ENCODE measurements at regions of chr12 and their contacts with region 1.

Region 1: GRCh38 chr12:39541471-39541870 is 78.1 kb downstream of the ABCD2 start:
- DNase-seq: no peak
- ATAC-seq: no peak
- H3K4me3 ChIP-seq: no peak overlapping the region
- H3K4me3 Mint-ChIP-seq: no peak overlapping the region
- H3K27ac ChIP-seq: no peak overlapping the region
- H3K27ac Mint-ChIP-seq: no peak overlapping the region
- H3K4me1 ChIP-seq: no peaks in the 10 kb centered on the region
- H3K4me1 Mint-ChIP-seq: no peaks in the 10 kb centered on the region
- H3K27me3 ChIP-seq: no peaks in the 10 kb centered on the region
- H3K27me3 Mint-ChIP-seq: no peaks in the 10 kb centered on the region

Region 2: DNA sequence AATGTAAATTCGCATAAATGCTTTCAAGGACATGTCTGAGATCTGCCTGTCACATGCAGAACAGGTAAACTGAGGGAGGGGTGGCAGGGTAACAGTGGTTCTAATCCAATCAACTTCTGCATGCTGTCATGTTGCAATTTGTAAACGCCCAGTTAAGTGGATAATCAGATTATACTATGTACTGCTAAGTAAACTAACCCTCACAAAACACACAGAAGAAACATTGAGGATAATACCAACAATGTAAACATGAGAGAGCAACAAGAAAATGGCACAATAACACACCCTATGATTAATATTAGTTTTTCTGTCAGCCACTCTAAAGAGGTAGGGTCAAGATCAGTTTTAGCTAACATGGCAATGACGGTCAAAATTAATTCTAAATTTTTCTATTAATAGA is 222.3 kb before region 1 on chr12:
- CTCF ChIA-PET with region 1: no interaction called
- POLR2A ChIA-PET with region 1: no interaction called
- intact Hi-C with region 1: loop called in 1 of 2 experiments (anchors 10 kb)
- DNase-seq: no peak
- ATAC-seq: no peak
- H3K4me3 ChIP-seq: no peak overlapping the region
- H3K4me3 Mint-ChIP-seq: no peak overlapping the region
- H3K27ac ChIP-seq: no peak overlapping the region
- H3K27ac Mint-ChIP-seq: no peak overlapping the region
- H3K4me1 ChIP-seq: no peaks in the 10 kb centered on the region
- H3K4me1 Mint-ChIP-seq: peaks cover 0 to 5% (median 0%) of the 10 kb centered on the region in 7 donors
- H3K27me3 ChIP-seq: no peaks in the 10 kb centered on the region
- H3K27me3 Mint-ChIP-seq: no peaks in the 10 kb centered on the region

Region 3: DNA sequence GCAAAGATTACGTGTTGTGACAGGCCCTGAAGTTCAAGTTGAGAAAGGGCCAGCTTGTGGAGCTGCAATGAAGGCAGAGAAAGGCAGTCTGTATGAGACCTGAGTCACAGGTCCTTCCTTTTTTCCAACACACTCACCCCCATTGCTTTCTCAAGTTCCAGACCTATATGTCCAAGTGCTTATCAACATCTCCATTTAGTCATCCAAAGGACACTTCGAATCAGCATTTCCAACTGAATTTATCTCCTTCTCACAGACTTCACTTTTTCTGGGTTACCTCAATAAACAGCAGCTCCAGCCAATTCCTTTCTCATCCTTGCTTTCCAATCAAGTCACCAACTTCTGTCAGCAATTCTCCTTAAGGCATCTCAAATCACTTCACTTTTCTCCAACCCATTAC is 42.2 kb before region 1 on chr12:
- CTCF ChIA-PET with region 1: no interaction called
- POLR2A ChIA-PET with region 1: no interaction called
- intact Hi-C with region 1: no loop called
- DNase-seq: no peak
- ATAC-seq: no peak
- H3K4me3 ChIP-seq: no peak overlapping the region
- H3K4me3 Mint-ChIP-seq: no peak overlapping the region
- H3K27ac ChIP-seq: no peak overlapping the region
- H3K27ac Mint-ChIP-seq: no peak overlapping the region
- H3K4me1 ChIP-seq: no peaks in the 10 kb centered on the region
- H3K4me1 Mint-ChIP-seq: no peaks in the 10 kb centered on the region
- H3K27me3 ChIP-seq: no peaks in the 10 kb centered on the region
- H3K27me3 Mint-ChIP-seq: no peaks in the 10 kb centered on the region

Region 4: DNA sequence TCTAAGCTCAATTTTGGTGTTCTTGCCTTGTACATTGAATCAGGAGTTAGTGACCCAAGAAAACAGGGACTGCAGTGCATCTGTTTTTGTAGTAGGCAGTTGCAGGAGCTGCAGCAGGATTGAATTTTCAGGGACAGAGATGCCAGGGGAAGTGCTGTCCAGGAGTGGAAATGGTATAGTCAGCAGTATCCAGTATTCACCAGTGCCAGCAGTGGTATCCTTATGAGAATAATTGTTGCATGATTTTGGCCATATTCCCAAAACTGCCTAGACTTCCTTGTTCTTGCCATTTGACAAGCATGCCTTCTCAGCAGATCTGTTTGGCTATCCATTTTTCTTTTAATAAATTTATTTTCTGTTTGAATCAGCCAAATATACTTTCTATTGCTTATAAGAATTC is 96.7 kb after region 1 on chr12:
- CTCF ChIA-PET with region 1: no interaction called
- POLR2A ChIA-PET with region 1: no interaction called
- intact Hi-C with region 1: no loop called
- DNase-seq: no peak
- ATAC-seq: no peak
- H3K4me3 ChIP-seq: no peak overlapping the region
- H3K4me3 Mint-ChIP-seq: no peak overlapping the region
- H3K27ac ChIP-seq: no peak overlapping the region
- H3K27ac Mint-ChIP-seq: peak overlapping the region in 1 of 9 donors; percentile 42
- H3K4me1 ChIP-seq: no peaks in the 10 kb centered on the region
- H3K4me1 Mint-ChIP-seq: peaks cover 0 to 7% (median 0%) of the 10 kb centered on the region in 7 donors
- H3K27me3 ChIP-seq: no peaks in the 10 kb centered on the region
- H3K27me3 Mint-ChIP-seq: peaks cover 0 to 4% (median 0%) of the 10 kb centered on the region in 5 donors

Region 5: GRCh38 chr12:39905152-39905551 is 363.7 kb after region 1 on chr12:
- CTCF ChIA-PET with region 1: no interaction called
- POLR2A ChIA-PET with region 1: no interaction called
- intact Hi-C with region 1: no loop called
- DNase-seq: no peak
- ATAC-seq: no peak
- H3K4me3 ChIP-seq: no peak overlapping the region
- H3K4me3 Mint-ChIP-seq: no peak overlapping the region
- H3K27ac ChIP-seq: no peak overlapping the region
- H3K27ac Mint-ChIP-seq: no peak overlapping the region
- H3K4me1 ChIP-seq: no peaks in the 10 kb centered on the region
- H3K4me1 Mint-ChIP-seq: no peaks in the 10 kb centered on the region
- H3K27me3 ChIP-seq: no peaks in the 10 kb centered on the region
- H3K27me3 Mint-ChIP-seq: no peaks in the 10 kb centered on the region